Activated CD8-positive, alpha-beta T cell treated with anti-CD3 and anti-CD28 coated beads, Interleukin-2, amount 10 ng/mL, durations not matched to agents 7 days and 5 days (primary cell): ENCODE measurements at regions of chr19 and their contacts with region 1.

Region 1: DNA sequence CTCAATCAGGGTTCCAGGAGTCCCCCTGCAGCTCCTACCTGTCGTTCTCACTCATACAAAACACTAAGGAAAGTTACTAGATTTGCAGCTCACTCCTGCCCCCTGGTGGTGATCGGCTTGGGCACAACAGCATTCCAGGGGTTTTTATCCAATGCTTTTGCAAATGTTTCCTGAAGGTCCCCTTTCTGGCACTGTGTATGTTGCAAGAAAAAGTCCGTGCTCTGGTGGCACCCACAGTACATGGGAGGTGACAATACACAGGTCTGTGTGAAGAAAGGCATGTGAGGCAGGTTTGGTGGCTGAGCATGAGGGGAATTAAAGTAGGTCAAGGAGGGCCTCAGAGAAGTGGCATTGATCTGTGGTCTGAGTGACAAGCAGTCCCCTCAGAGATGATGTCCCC is 8.6 kb upstream of the TYK2 start:
- DNase-seq: peak; percentile 86
- ATAC-seq: peak; percentile 42
- H3K4me3 Mint-ChIP-seq: no peak overlapping the region
- H3K27ac Mint-ChIP-seq: no peak overlapping the region
- H3K4me1 Mint-ChIP-seq: peaks cover 6% of the 10 kb centered on the region
- H3K27me3 Mint-ChIP-seq: no peaks in the 10 kb centered on the region

Region 2: GRCh38 chr19:10259162-10259905 is 129.6 kb before region 1 on chr19:
- CTCF ChIA-PET with region 1: interaction called, 383 read pairs
- POLR2A ChIA-PET with region 1: interaction called, 8 read pairs
- DNase-seq: peak; percentile 94
- ATAC-seq: peak; percentile 81
- H3K4me3 Mint-ChIP-seq: no peak overlapping the region
- H3K27ac Mint-ChIP-seq: no peak overlapping the region
- H3K4me1 Mint-ChIP-seq: peaks cover 27% of the 10 kb centered on the region
- H3K27me3 Mint-ChIP-seq: no peaks in the 10 kb centered on the region

Region 3: GRCh38 chr19:10279737-10280442 is 109.1 kb before region 1 on chr19:
- CTCF ChIA-PET with region 1: interaction called, 15 read pairs
- POLR2A ChIA-PET with region 1: interaction called, 5 read pairs
- DNase-seq: peak; percentile 44
- ATAC-seq: peak; percentile 60
- H3K4me3 Mint-ChIP-seq: no peak overlapping the region
- H3K27ac Mint-ChIP-seq: peak overlapping the region; percentile 58
- H3K4me1 Mint-ChIP-seq: peaks cover 31% of the 10 kb centered on the region
- H3K27me3 Mint-ChIP-seq: no peaks in the 10 kb centered on the region

Region 4: DNA sequence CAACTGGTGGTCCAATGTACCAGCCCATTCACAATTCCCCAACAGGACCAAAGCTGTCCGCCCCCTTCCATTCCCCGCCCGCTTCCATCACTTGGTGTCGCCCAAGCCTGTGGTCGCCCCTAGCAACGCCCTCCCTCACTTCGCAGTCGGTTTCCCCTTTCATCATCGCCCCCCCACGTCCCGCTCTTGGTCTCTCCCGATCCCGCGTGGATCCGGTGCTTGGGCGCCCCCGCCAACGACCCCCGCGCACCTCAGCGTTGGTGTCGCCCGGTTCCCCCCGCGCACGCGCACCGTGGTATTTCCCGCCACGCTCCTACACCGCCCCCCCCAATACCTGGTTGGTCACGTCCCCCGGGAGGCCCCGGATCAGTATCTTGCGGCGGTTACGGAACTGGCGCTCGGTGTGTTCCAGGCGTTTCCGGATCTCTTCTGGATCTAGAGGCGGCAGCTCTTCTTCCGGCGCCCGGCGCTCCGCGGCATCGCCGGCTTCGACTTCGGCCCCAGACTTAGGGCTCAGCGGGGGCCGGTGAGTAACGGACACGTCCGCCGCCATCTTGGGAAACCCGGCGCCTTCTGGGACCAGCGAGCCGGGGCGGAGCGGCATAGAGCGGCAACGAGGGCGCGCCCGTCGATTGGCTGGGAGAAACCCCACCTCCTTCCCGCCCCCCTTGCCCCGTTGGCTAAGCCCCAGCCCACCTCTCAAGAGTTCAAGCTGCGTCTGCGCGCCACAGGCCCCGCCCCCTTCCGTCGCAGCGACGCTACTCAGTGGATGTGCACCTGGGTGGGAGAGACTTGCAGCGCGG is 55.8 kb before region 1 on chr19 and contains the start of gene RAVER1:
- CTCF ChIA-PET with region 1: interaction called, 12 read pairs
- POLR2A ChIA-PET with region 1: interaction called, 3 read pairs
- DNase-seq: peak; percentile 99
- ATAC-seq: peak; percentile 97
- H3K4me3 Mint-ChIP-seq: peak within 1 kb of the TSS; percentile 95
- H3K27ac Mint-ChIP-seq: peak within 1 kb of the TSS; percentile 96
- H3K4me1 Mint-ChIP-seq: peaks cover 37% of the 10 kb centered on the region
- H3K27me3 Mint-ChIP-seq: no peaks in the 10 kb centered on the region
- total RNA-seq, gene RAVER1: 79.8 to 91.7 TPM

Region 5: GRCh38 chr19:10361569-10362011 is 27.4 kb before region 1 on chr19:
- CTCF ChIA-PET with region 1: no interaction called
- POLR2A ChIA-PET with region 1: no interaction called
- DNase-seq: no peak
- ATAC-seq: no peak
- H3K4me3 Mint-ChIP-seq: no peak overlapping the region
- H3K27ac Mint-ChIP-seq: no peak overlapping the region
- H3K4me1 Mint-ChIP-seq: no peaks in the 10 kb centered on the region
- H3K27me3 Mint-ChIP-seq: no peaks in the 10 kb centered on the region

Region 6: GRCh38 chr19:10403137-10404021 is 14.4 kb after region 1 on chr19 and contains the start of gene CDC37:
- CTCF ChIA-PET with region 1: interaction called, 26 read pairs
- POLR2A ChIA-PET with region 1: interaction called, 4 read pairs
- DNase-seq: peak; percentile 98
- ATAC-seq: peak; percentile 71
- H3K4me3 Mint-ChIP-seq: peak within 1 kb of the TSS; percentile 94
- H3K27ac Mint-ChIP-seq: peak within 1 kb of the TSS; percentile 95
- H3K4me1 Mint-ChIP-seq: peaks cover 70% of the 10 kb centered on the region
- H3K27me3 Mint-ChIP-seq: no peaks in the 10 kb centered on the region
- total RNA-seq, gene CDC37: 264 to 288 TPM

Region 7: GRCh38 chr19:10431943-10432735 is 43.2 kb after region 1 on chr19:
- CTCF ChIA-PET with region 1: interaction called, 10 read pairs
- POLR2A ChIA-PET with region 1: no interaction called
- DNase-seq: peak; percentile 73
- ATAC-seq: peak; percentile 46
- H3K4me3 Mint-ChIP-seq: peak overlapping the region; percentile 84
- H3K27ac Mint-ChIP-seq: peak overlapping the region; percentile 95
- H3K4me1 Mint-ChIP-seq: peaks cover 78% of the 10 kb centered on the region
- H3K27me3 Mint-ChIP-seq: peaks cover 2% of the 10 kb centered on the region

Region 8: DNA sequence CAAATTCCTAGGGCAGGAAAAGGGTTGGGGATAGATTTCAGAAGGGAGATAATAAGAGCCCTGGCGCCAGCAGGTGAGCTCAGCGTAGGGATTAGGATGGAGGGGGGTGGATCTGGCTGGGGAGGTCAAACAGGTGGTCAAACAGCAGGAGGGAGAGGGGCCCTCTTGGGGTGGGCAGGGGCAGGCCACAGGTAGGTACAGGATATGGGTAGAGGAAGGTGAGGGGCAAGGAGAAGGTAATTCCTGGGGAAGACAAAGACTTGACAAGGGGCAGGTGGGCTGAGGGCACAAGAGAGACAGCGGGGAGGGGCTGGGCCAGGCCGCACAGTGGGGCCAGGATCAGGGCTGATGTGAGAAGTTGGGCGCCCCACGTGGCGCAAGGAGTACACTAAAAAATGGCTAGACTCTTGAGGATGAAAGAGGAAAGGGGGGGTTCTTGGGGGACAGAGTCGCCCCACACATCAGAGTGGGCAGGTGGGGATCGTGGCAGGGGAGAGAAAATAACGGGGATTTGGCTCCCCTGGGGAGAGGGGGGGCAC is 176.1 kb after region 1 on chr19:
- CTCF ChIA-PET with region 1: no interaction called
- POLR2A ChIA-PET with region 1: no interaction called
- DNase-seq: peak; percentile 75
- ATAC-seq: no peak
- H3K4me3 Mint-ChIP-seq: peak overlapping the region; percentile 98
- H3K27ac Mint-ChIP-seq: peak overlapping the region; percentile 94
- H3K4me1 Mint-ChIP-seq: peaks cover 46% of the 10 kb centered on the region
- H3K27me3 Mint-ChIP-seq: no peaks in the 10 kb centered on the region

Region 9: GRCh38 chr19:10612491-10613119 is 223.6 kb after region 1 on chr19:
- CTCF ChIA-PET with region 1: no interaction called
- POLR2A ChIA-PET with region 1: no interaction called
- DNase-seq: no peak
- ATAC-seq: no peak
- H3K4me3 Mint-ChIP-seq: no peak overlapping the region
- H3K27ac Mint-ChIP-seq: peak overlapping the region; percentile 55
- H3K4me1 Mint-ChIP-seq: peaks cover 26% of the 10 kb centered on the region
- H3K27me3 Mint-ChIP-seq: no peaks in the 10 kb centered on the region